ENCODE measurements at regions of chr11 and their contacts with region 1.

Region 1: GRCh38 chr11:35145271-35145670 is 6.3 kb downstream of the CD44 start:
- DNase-seq: no peak
- H3K4me3 ChIP-seq: peak overlapping the region; percentile 47
- H3K27ac ChIP-seq: peak overlapping the region; percentile 2
- H3K27me3 ChIP-seq: no peaks in the 10 kb centered on the region
- CTCF ChIP-seq: no peak

Region 2: DNA sequence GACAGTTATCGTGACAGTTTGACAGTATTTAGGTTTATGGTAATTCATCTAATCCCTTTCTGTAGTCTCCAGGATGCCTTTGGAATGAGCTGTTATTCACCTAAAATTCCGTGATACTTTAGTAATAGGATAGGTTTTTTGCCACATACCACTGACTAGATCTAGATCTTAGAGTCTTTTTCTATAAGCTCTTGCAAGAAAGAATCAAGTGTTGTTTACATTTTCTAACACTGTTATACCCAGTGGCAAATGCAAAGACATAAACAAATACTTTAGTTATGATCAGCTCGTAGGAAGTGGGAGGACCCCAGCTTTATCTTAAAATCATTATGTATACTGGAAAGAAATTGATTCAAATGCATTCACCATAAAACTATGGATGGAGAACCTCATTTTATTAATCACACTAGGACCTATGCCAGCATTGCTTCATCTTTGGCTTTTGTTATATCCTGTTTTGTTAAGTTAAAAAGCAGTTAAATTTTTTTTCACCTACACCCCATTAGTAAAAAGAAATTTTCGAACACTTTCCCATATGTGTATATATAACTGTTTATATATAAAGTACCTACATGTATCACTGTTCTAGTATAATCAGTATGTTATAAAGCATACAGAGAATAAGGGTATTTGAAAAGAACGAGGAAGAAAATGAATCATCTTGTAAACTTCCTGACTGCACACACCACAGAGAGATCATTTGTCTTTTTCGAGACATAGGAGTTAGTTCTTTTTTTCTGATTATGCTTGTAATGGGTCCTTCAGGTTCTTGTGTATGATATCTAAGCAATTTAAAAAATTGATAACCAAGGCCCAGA is 168.0 kb before region 1 on chr11:
- CTCF ChIA-PET with region 1: no interaction called
- POLR2A ChIA-PET with region 1: interaction called, 15 read pairs
- DNase-seq: peak; percentile 90
- H3K4me3 ChIP-seq: no peak overlapping the region
- H3K27ac ChIP-seq: no peak overlapping the region
- H3K27me3 ChIP-seq: no peaks in the 10 kb centered on the region
- CTCF ChIP-seq: no peak

Region 3: DNA sequence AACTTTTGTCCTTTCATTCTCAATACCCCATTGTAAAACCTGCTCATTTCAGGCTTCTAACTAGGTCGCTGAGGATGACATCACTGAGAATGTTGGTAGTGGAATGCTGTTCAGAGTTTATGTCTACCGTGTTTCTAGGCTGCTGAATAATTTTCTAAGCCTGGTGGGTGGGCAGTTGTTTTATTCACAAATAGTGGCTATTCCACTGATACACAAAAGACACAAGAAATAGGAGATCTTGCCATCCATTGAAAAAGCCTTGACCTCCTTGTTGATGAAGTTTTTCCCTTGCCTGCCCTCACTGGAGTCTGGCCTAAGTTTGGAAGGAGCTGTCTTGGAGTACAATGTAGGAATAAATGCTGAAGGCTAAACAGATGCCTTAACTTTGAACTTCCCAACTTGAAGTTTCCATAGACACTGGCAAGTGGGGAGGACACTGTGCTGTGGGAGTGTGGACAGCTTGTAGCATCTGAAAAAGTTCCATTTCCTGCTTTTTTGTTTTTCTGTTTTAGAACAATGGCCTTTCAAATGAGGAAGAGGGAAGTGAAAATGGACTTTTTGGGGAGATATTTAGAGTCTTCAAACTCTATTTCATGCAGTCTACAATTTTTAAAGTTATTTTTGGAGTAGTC is 576.5 kb after region 1 on chr11:
- CTCF ChIA-PET with region 1: no interaction called
- POLR2A ChIA-PET with region 1: no interaction called
- DNase-seq: no peak
- H3K4me3 ChIP-seq: no peak overlapping the region
- H3K27ac ChIP-seq: no peak overlapping the region
- H3K27me3 ChIP-seq: no peaks in the 10 kb centered on the region
- CTCF ChIP-seq: no peak